Transverse colon (tissue), 4 donors: ENCODE measurements at regions of chr14 and their contacts with region 1.

Region 1: GRCh38 chr14:95609387-95609990 is 74.6 kb downstream of the GLRX5 start:
- DNase-seq: no peak
- H3K4me3 ChIP-seq: no peak overlapping the region
- H3K27ac ChIP-seq: no peak overlapping the region
- H3K4me1 ChIP-seq: no peaks in the 10 kb centered on the region
- H3K27me3 ChIP-seq: peaks cover 20% of the 10 kb centered on the region
- CTCF ChIP-seq: peak in 3 of 5 experiments; percentile 10 to 29 (median 24)
- EP300 ChIP-seq: no peak
- POLR2A ChIP-seq: no peak

Region 2: GRCh38 chr14:94080471-94081289 is 1528.8 kb before region 1 on chr14 and contains the start of gene DDX24:
- in situ Hi-C with region 1: no loop called
- intact Hi-C with region 1: loop called (anchors 5 kb)
- DNase-seq: peak; percentile 98
- H3K4me3 ChIP-seq: peak within 1 kb of the TSS; percentile 68 to 100 (median 96)
- H3K27ac ChIP-seq: peak within 1 kb of the TSS; percentile 95 to 99 (median 98)
- H3K4me1 ChIP-seq: peaks cover 11 to 56% (median 34%) of the 10 kb centered on the region in 4 donors
- H3K27me3 ChIP-seq: no peaks in the 10 kb centered on the region
- CTCF ChIP-seq: peak in 1 of 5 experiments; percentile 8
- EP300 ChIP-seq: no peak
- POLR2A ChIP-seq: peak; percentile 98
- total RNA-seq, gene DDX24: 70.2 to 319 (median 87.7) TPM